Caco-2 (cell line): ENCODE measurements at regions of chr10 and their contacts with region 1.

Region 1: DNA sequence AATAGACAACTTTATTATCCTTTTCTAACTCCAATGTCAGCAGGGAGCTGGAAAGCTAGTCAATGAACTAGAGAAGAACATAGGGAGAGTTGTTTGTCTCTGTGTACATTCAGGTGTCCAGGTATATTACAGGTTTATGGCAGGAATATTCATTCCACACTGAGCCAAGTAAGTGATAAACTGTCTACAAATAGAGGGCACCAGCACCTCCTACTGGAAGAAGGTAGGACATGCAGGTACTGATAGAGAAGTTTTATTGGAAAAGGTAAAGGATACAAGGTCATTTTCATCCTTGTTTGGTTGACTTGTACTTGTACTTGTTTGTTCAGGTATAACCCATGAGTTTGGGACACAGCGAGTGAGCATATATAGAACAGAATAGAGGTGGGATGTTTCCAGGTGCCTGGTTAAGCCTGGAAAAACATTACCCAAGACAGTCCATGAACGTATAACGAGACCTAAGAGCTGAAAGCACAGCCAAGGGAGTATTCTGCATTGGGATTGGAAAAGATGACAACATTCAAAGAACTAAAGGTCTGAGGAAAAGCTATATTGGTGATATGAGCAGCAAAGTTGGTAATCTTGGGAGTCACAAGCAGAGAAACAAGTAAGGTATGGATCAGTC is 61.4 kb upstream of the PPP1R3C start:
- DNase-seq: peak in 1 of 2 experiments; percentile 28
- H3K4me3 ChIP-seq: no peak overlapping the region
- H3K4me3 Mint-ChIP-seq: no peak overlapping the region
- H3K27ac Mint-ChIP-seq: no peak overlapping the region
- H3K4me1 ChIP-seq: no peaks in the 10 kb centered on the region
- H3K4me1 Mint-ChIP-seq: no peaks in the 10 kb centered on the region
- H3K27me3 ChIP-seq: no peaks in the 10 kb centered on the region
- H3K27me3 Mint-ChIP-seq: peaks cover 3% of the 10 kb centered on the region
- CTCF ChIP-seq: peak; percentile 52 to 56

Region 2: DNA sequence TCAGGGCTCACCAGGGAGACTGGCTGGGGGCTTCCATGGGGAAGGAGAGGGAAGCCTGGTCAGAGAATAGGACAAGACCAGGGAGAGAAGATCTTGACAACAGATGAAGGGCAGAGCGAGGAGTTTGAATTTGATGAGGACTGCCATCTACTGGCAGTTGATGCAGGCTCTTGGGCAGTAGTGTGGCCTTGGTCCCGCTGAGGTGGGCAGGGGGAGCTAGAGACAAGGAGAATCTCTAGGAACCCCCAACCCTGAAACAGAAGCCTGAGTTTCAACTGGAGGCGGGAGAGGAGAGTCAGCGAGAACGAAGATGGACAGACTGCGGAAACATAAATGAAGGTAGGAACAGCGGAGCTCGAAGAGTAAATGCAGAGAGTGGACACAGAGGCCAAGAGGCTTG is 142.4 kb before region 1 on chr10:
- CTCF ChIA-PET with region 1: no interaction called
- POLR2A ChIA-PET with region 1: no interaction called
- intact Hi-C with region 1: loop called (anchors 1 kb)
- DNase-seq: peak in 1 of 2 experiments; percentile 44
- H3K4me3 ChIP-seq: no peak overlapping the region
- H3K4me3 Mint-ChIP-seq: no peak overlapping the region
- H3K27ac Mint-ChIP-seq: no peak overlapping the region
- H3K4me1 ChIP-seq: peaks cover 7% of the 10 kb centered on the region
- H3K4me1 Mint-ChIP-seq: peaks cover 13% of the 10 kb centered on the region
- H3K27me3 ChIP-seq: no peaks in the 10 kb centered on the region
- H3K27me3 Mint-ChIP-seq: peaks cover 3% of the 10 kb centered on the region
- CTCF ChIP-seq: peak in 1 of 2 experiments; percentile 77

Region 3: DNA sequence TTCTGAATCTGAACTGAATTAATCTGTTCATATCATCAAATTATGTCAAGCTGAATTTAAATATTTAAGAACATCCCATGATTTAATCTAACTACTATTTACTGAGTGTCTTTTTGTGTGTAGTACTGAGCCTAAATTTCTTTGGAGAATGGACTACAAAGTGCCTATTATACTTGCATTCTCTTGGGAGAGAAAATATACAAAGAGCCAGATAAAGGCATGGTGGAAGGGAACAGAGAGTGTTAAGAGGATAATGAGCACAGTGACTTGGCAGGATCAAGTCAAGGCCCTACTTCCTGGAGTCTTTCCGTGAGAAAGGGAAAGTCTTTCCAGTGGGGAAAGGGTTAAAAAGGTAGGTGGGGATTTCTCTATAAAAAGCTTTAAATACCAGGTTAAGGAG is 119.0 kb after region 1 on chr10:
- CTCF ChIA-PET with region 1: no interaction called
- POLR2A ChIA-PET with region 1: no interaction called
- intact Hi-C with region 1: no loop called
- DNase-seq: no peak
- H3K4me3 ChIP-seq: no peak overlapping the region
- H3K4me3 Mint-ChIP-seq: no peak overlapping the region
- H3K27ac Mint-ChIP-seq: no peak overlapping the region
- H3K4me1 ChIP-seq: peaks cover 23% of the 10 kb centered on the region
- H3K4me1 Mint-ChIP-seq: peaks cover 24% of the 10 kb centered on the region
- H3K27me3 ChIP-seq: no peaks in the 10 kb centered on the region
- H3K27me3 Mint-ChIP-seq: no peaks in the 10 kb centered on the region
- CTCF ChIP-seq: no peak

Region 4: GRCh38 chr10:92024700-92025099 is 330.4 kb after region 1 on chr10:
- CTCF ChIA-PET with region 1: no interaction called
- POLR2A ChIA-PET with region 1: no interaction called
- intact Hi-C with region 1: no loop called
- DNase-seq: no peak
- H3K4me3 ChIP-seq: no peak overlapping the region
- H3K4me3 Mint-ChIP-seq: no peak overlapping the region
- H3K27ac Mint-ChIP-seq: peak overlapping the region; percentile 63
- H3K4me1 ChIP-seq: peaks cover 38% of the 10 kb centered on the region
- H3K4me1 Mint-ChIP-seq: peaks cover 19% of the 10 kb centered on the region
- H3K27me3 ChIP-seq: no peaks in the 10 kb centered on the region
- H3K27me3 Mint-ChIP-seq: no peaks in the 10 kb centered on the region
- CTCF ChIP-seq: no peak